Posterior vena cava (tissue), 2 donors: ENCODE measurements at regions of chr1 and their contacts with region 1.

Region 1: DNA sequence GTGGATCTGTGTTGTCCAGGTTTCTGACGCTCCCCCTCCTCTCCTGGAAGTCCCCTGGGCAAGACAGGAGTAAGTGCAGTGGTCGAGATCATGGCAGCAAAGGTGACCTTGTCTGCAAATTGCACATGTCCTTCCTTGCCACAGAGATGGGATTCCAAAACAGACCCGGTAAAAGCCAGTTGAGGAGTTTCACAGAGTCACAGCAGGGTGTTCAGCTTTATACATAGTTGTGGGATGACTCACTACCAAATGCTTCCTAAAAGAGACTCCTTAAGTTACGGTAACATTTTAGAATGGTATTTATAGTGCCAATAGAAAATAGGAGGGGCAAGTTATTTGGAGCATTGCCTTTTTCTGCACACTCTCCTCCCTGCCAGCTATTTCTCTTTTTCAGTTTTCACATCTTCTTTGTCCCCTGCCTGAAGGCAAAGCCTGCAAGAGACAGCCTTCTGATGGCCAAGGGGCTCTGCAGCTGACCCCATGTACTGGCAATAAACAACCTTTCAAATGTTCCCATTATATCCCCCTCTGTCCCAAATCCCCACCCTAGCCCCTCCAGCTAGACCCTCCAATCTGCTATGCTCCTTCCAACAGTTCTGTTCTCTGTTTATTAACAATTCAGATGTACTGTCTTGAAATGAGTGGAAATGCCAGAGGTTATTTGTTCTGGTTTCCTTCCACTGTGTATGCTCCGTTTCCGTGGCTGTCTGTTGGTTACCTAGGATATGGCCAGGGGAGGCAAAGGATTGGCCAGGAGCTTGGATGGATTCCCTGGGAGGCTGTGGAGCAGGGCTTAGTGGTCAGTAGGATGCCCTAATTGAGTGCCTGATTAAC is 115.0 kb downstream of the TGFB2 start:
- DNase-seq: peak; percentile 83

Region 2: GRCh38 chr1:218415726-218416125 is 44.4 kb before region 1 on chr1:
- intact Hi-C with region 1: loop called in 1 of 2 experiments (anchors 2 kb)
- DNase-seq: no peak

Region 3: DNA sequence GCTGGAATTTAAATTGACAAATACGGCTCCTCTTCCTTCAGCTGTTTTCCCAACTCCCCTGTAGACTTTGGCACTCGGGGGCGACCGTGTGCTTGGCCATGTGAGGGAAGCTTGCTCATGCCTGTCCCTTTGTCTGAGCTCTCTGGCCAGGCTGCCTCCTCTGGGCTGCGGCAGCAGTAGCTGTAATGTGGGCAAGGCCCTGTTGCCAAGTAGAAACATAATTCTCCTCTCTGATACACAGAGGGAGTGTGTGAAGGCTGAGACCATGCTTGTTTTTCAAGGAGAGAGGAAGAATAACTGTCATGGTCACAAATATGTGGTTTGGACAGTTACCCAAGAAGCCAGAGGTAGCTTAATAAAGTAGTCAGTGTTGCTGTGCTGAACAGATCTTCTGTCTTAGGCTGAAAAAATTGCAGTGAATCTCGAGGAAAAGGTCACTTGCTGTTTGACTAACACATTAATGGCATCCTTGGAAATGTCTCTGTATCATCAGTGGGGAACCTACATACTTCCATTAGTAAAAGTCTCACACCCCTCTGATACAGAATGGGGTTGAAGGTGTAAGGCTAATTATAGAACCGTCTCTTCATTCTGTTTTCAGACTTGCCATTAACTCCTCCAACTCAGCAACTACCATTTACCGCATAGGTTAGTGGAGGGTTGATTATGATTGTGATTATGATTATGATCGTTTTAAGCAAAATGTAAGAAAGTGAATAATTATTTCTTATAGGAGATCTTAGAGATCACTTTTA is 20.4 kb before region 1 on chr1:
- intact Hi-C with region 1: no loop called
- DNase-seq: no peak

Region 4: GRCh38 chr1:218516526-218516925 is 56.4 kb after region 1 on chr1:
- intact Hi-C with region 1: no loop called
- DNase-seq: no peak